ENCODE measurements at regions of chr5 and their contacts with region 1.

Region 1: DNA sequence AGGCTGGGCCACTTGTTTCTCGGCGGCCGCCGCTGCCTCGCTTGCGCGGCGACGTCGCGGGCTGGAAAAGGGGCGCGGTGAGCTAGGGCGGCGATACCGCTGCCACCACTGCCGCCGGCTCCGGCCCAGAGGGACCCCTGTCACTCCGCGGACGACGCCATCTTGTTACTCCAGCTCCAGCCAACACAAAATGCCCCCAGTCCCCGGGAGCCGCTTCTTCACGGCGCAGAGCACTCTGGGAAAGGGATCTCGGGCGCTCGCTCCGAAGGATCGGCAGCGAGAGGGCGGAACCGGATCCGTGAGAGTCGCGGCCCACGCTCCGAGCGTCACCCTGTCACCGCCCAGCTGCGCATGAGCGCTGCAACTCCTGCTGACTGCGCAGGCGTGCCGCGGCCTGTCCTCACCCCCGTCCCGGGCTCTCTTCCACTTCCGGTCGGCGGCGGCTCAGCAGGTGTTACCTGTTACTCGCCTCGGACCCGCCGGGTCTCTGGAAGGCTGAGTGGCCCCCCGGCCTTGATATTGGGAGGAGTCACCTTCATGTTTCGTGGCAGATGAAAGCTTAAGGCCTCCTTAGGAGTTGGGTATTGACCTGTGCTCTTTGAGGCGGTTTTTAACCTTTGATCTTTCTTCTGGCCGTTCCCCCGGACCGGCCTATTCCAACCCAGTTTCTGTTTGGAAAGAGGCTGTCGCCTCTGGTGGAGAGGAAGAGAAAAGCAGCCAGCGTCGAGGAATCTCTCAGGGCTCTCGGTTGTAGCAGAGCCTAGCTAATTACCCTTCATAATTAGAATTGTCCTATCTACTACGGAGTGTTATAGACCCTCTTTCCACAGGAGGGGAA is at the start of gene CSNK1A1:
- DNase-seq: peak; percentile 100
- H3K4me3 Mint-ChIP-seq: peak within 1 kb of the TSS; percentile 97
- H3K27ac Mint-ChIP-seq: peak within 1 kb of the TSS; percentile 98
- H3K4me1 Mint-ChIP-seq: peaks cover 25% of the 10 kb centered on the region
- H3K27me3 Mint-ChIP-seq: no peaks in the 10 kb centered on the region
- total RNA-seq, gene CSNK1A1: 175 TPM in 2 replicates

Region 2: DNA sequence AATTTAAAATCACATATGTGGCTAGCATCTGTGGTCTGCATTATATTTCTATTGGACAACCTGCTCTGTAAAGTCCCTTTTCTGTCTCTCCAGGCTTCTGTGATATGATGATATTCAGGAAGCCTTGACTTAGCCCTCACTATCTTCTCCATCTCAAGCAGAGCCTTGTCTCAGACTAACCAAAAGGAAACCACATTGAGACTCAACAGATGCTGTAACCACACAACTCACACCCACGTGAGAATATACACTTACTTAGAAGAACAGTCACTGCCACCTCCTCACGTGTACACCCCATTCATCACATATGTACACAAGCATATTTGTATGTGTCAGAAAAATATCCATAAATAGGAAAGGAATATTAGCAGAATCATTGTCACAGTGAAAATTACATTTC is 930.7 kb before region 1 on chr5:
- intact Hi-C with region 1: loop called (anchors 10 kb)
- DNase-seq: peak; percentile 81
- H3K4me3 Mint-ChIP-seq: peak overlapping the region; percentile 10
- H3K27ac Mint-ChIP-seq: peak overlapping the region; percentile 55
- H3K4me1 Mint-ChIP-seq: peaks cover 25% of the 10 kb centered on the region
- H3K27me3 Mint-ChIP-seq: peaks cover 36% of the 10 kb centered on the region

Region 3: GRCh38 chr5:149442563-149443182 is 108.7 kb before region 1 on chr5:
- intact Hi-C with region 1: loop called (anchors 1 kb)
- DNase-seq: peak; percentile 92
- H3K4me3 Mint-ChIP-seq: no peak overlapping the region
- H3K27ac Mint-ChIP-seq: peak overlapping the region; percentile 32
- H3K4me1 Mint-ChIP-seq: peaks cover 23% of the 10 kb centered on the region
- H3K27me3 Mint-ChIP-seq: no peaks in the 10 kb centered on the region

Region 4: GRCh38 chr5:149561848-149562247 is 10.4 kb after region 1 on chr5:
- intact Hi-C with region 1: loop called (anchors 1 kb)
- DNase-seq: no peak
- H3K4me3 Mint-ChIP-seq: no peak overlapping the region
- H3K27ac Mint-ChIP-seq: peak overlapping the region; percentile 17
- H3K4me1 Mint-ChIP-seq: peaks cover 20% of the 10 kb centered on the region
- H3K27me3 Mint-ChIP-seq: no peaks in the 10 kb centered on the region

Region 5: DNA sequence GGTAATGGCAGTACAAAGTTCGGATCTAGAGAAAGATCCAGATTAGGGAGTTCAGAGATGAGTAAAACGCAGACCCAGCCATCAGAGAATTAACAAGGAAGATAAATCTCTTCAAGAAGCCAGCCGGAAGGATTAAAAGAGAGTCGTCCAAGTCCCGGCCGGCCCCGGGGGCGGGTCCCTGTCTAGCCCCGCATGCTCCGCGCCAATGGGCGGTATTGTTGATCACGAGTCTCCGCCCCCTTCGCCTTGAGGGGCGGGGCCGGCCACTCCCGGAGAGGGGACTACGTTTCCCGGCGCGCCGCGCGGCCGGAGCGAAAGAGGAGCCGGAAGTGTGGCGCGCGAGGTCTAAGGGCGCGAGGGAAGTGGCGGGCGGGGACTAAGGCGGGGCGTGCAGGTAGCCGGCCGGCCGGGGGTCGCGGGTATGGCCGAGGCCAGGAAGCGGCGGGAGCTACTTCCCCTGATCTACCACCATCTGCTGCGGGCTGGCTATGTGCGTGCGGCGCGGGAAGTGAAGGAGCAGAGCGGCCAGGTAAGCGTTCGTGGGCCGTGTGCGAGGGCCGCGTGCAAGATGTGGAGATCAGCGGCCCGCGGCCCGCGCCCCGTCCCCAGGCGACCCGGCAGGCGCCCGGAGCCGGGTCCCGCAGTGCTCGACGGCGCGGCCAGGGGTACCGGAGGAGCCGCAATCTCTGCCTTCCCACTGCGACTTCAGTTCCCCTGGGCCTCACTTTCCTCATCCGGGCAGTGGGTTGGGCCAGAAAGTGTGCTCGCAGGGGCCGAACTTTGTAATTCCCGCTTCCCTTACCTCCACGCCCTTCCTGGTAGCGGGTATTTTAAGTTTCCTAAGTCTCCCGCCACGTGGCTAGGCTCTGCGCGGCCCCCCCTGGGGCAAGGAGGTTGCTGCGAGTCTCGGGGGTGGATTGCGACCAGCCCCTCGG is 806.2 kb after region 1 on chr5 and contains the start of gene TCOF1:
- intact Hi-C with region 1: loop called (anchors 1 kb)
- DNase-seq: peak; percentile 100
- H3K4me3 Mint-ChIP-seq: peak within 1 kb of the TSS; percentile 92
- H3K27ac Mint-ChIP-seq: peak within 1 kb of the TSS; percentile 93
- H3K4me1 Mint-ChIP-seq: peaks cover 35% of the 10 kb centered on the region
- H3K27me3 Mint-ChIP-seq: peaks cover 12% of the 10 kb centered on the region
- total RNA-seq, gene TCOF1: 130 and 140 TPM in 2 replicates